ENCODE measurements at regions of chr1 and their contacts with region 1.

Region 1: DNA sequence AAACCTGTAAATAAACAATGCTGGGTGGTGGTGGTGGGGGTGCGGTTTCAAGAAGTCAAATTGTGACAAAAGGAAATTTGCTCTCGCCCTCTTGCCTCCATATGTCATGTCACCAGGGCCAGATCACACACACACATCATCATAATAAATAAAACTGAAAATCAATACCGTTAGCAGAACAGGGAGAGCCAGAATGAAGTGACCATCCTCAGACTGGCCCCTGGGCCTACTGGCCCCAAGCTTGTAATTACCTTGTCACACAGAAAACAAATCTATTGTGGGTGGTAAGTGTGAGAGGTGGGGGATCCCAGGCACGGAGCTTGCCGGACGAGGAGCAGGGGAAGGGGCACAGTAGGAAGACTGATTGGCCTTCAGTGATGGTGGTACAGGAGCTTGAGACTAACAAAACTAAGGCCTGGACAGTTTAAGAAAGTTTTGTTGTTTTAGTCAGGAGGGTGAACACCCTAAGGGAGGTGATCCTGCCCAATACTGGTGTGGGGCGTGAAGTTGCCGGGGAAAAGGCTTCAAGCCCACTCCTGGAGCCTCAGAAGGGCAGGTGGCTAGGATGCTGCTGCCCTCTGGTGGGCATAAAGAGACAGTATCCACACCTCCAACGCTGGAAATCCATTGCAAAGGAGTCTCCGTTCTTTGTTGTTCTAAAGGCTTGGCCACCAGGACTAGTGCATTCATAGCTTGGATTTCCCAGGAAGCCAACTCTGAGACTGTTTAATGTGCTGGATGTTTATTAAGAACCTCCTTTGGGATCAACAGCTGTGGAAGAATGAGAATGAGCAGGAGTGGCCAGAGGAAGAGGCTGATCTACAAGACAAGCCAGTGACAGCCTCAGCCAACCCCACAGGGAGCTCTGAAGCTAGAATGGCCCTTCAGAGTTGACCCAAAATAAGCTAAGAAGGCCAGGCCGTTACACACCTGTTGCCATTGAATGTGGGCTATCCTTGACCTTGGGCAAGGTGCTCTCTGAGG is 8.1 kb upstream of the C1orf216 start:
- DNase-seq: peak in 1 of 2 donors; percentile 31
- ATAC-seq: peak; percentile 79 to 98
- H3K4me3 ChIP-seq: no peak overlapping the region
- H3K27ac ChIP-seq: no peak overlapping the region
- H3K4me1 ChIP-seq: no peaks in the 10 kb centered on the region
- H3K27me3 ChIP-seq: no peaks in the 10 kb centered on the region
- CTCF ChIP-seq: peak; percentile 67 to 90 (median 73)
- POLR2A ChIP-seq: no peak

Region 2: GRCh38 chr1:35451125-35451528 is 275.6 kb before region 1 on chr1:
- in situ Hi-C with region 1: loop called in 2 of 4 experiments (anchors 10 to 25 kb)
- intact Hi-C with region 1: loop called (anchors 1 kb)
- DNase-seq: peak; percentile 29 to 63
- ATAC-seq: peak; percentile 79 to 85
- H3K4me3 ChIP-seq: no peak overlapping the region
- H3K27ac ChIP-seq: no peak overlapping the region
- H3K4me1 ChIP-seq: peaks cover 8 to 9% of the 10 kb centered on the region in 2 donors
- H3K27me3 ChIP-seq: no peaks in the 10 kb centered on the region
- CTCF ChIP-seq: peak; percentile 67 to 83 (median 76)
- POLR2A ChIP-seq: no peak

Region 3: DNA sequence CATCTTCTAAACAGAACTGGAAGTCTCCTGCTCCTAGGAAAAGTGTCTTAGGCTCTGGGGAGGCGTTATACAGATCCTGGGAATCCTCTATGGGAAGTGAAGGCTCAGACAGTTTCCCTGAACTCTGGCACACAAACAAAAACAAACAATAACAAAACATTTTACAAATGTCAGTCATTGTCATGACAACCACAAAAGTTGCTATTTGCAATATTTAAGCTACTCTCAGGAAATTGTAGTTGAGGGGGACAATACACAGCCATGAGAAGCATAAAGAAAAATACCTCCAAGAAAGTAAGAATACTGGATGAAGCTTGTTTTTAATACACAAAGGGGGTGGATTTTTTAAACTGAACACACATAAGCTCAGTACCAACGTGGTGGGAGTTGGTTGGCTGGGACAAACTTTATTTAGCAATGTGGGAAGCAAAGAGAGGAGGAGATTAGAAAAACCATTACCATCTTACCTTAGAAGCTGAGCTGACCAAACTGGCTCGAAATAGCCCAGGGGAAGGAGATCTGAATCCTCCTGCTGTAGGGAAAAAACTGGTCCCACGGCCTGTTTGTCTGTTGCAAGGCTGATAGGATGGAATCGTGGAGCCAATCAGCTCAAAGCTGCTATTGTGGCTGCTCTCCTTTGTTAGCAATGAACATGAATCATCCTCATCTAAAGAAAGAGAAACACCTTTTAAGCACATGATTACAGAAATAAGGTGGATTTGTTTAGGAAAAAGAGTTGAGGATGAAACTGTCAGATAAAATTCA is 21.4 kb after region 1 on chr1:
- in situ Hi-C with region 1: no loop called
- intact Hi-C with region 1: no loop called
- DNase-seq: no peak
- ATAC-seq: no peak
- H3K4me3 ChIP-seq: no peak overlapping the region
- H3K27ac ChIP-seq: no peak overlapping the region
- H3K4me1 ChIP-seq: no peaks in the 10 kb centered on the region
- H3K27me3 ChIP-seq: no peaks in the 10 kb centered on the region
- CTCF ChIP-seq: no peak
- POLR2A ChIP-seq: no peak

Region 4: GRCh38 chr1:35769759-35770446 is 43.2 kb after region 1 on chr1 and contains the start of gene CLSPN:
- in situ Hi-C with region 1: no loop called
- intact Hi-C with region 1: loop called (anchors 5 kb)
- DNase-seq: peak; percentile 80 to 87
- ATAC-seq: peak; percentile 96 to 98
- H3K4me3 ChIP-seq: peak within 1 kb of the TSS; percentile 50 to 94 (median 68)
- H3K27ac ChIP-seq: peak within 1 kb of the TSS in 3 of 4 donors; percentile 50 to 58 (median 56)
- H3K4me1 ChIP-seq: peaks cover 0 to 6% of the 10 kb centered on the region in 2 donors
- H3K27me3 ChIP-seq: peaks cover 0 to 3% (median 0%) of the 10 kb centered on the region in 3 donors
- CTCF ChIP-seq: no peak
- POLR2A ChIP-seq: peak in 1 of 2 donors; percentile 31
- total RNA-seq, gene CLSPN: 0.27 to 0.46 TPM in 2 of 4 donors, not detected in the others